AG04450 (cell line): ENCODE measurements at regions of chr1 and their contacts with region 1.

Region 1: DNA sequence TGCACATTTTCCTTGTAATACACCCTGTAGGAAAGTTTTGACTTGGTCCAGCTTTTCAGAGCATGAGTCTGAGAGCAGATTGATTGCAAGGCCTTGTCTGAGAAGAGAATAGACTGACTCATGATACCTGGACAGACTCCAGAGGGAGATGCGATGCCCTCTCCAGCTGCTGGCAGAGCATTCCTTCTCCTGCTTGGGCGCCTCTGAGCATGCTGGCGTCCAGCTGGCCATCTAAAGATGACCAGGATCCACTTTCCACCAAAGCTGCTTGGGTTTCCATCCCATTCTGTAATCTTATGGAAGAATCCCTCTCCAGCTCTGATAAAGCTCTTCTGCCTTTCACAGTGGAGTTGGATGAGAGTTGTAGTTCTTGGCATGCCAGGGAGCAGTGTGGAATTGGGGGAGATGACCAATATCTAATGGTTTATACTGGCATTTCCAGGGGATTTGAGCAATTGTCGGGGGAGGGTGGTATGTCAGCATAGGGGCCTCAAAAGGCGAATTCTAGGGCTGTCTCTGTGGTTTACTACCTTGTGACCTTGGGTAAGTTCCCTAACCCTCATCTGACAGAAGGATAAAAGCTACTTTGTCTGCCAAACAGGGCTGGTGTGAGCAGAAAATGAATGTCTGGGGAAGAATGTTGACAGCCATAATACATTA is 19.5 kb downstream of the SZRD1 start:
- DNase-seq: peak; percentile 44
- H3K4me3 ChIP-seq: peak overlapping the region; percentile 52
- H3K27ac ChIP-seq: peak overlapping the region; percentile 80
- H3K27me3 ChIP-seq: no peaks in the 10 kb centered on the region
- CTCF ChIP-seq: no peak

Region 2: GRCh38 chr1:16300436-16300835 is 86.1 kb before region 1 on chr1:
- CTCF ChIA-PET with region 1: no interaction called
- POLR2A ChIA-PET with region 1: no interaction called
- DNase-seq: no peak
- H3K4me3 ChIP-seq: no peak overlapping the region
- H3K27ac ChIP-seq: no peak overlapping the region
- H3K27me3 ChIP-seq: no peaks in the 10 kb centered on the region
- CTCF ChIP-seq: no peak

Region 3: GRCh38 chr1:16375521-16376359 is 10.8 kb before region 1 on chr1:
- CTCF ChIA-PET with region 1: interaction called, 11 read pairs
- POLR2A ChIA-PET with region 1: interaction called, 10 read pairs
- DNase-seq: peak; percentile 54
- H3K4me3 ChIP-seq: peak overlapping the region; percentile 15; the same call in 1 of the 2 replicates
- H3K27ac ChIP-seq: peak overlapping the region; percentile 90
- H3K27me3 ChIP-seq: no peaks in the 10 kb centered on the region
- CTCF ChIP-seq: no peak

Region 4: DNA sequence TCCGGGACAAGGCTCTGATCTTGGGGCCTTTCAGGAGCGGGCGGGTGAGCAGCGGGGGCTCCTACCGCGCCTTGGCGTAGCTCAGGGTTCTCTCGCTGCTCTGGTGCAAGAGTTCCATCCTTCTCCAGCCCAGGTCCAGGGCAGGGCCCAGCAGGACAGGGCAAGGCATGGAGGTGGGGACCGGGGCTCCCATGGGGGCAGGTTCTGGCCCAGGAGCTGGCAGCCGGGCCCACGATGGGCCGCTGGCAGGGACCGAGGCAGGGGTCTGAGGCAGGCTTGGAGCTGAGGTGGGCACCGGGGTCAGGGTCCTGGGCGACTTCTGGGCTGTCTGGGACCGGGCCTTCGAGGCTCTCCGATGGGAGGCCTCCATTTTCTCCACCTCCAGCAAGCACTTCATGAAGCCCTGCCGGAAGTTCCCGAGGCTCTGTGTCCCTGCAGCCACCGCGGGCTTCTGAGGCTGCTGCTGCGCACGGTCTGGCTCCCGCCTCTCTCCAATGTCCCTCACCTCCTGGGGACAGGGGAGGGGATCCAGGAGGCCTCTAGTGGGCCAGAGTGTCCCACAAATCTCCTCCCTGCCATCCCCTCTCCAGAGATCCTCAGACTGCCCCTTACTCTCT is 23.1 kb after region 1 on chr1:
- CTCF ChIA-PET with region 1: no interaction called
- POLR2A ChIA-PET with region 1: no interaction called
- DNase-seq: no peak
- H3K4me3 ChIP-seq: no peak overlapping the region
- H3K27ac ChIP-seq: no peak overlapping the region
- H3K27me3 ChIP-seq: peaks cover 3% of the 10 kb centered on the region
- CTCF ChIP-seq: no peak

Region 5: GRCh38 chr1:17053685-17054410 is 667.3 kb after region 1 on chr1 and contains the start of gene SDHB:
- CTCF ChIA-PET with region 1: no interaction called
- POLR2A ChIA-PET with region 1: no interaction called
- DNase-seq: peak; percentile 97
- H3K4me3 ChIP-seq: peak within 1 kb of the TSS; percentile 100
- H3K27ac ChIP-seq: peak within 1 kb of the TSS; percentile 70
- H3K27me3 ChIP-seq: peaks cover 5% of the 10 kb centered on the region
- CTCF ChIP-seq: no peak
- polyA plus RNA-seq, gene SDHB: 206 and 232 TPM in 2 replicates